ENCODE measurements at regions of chr10 and their contacts with region 1.

Region 1: DNA sequence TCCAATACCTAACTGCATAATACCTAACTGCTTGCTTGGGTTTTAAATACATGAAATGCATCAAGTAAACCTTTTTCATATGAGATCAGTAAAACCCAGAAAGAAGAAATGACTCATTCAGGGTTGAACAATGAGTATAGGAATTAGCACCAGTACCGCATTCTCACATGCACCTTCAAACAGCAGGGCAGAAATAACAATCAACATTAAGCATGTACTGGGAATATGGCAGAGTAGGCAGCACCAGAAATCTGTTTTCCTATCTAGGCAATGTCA is 850.3 kb upstream of the SORCS1 start:
- DNase-seq: no peak

Region 2: GRCh38 chr10:107966673-107967225 is 48.1 kb before region 1 on chr10:
- intact Hi-C with region 1: no loop called
- DNase-seq: no peak

Region 3: GRCh38 chr10:108049668-108050067 is 34.8 kb after region 1 on chr10:
- intact Hi-C with region 1: no loop called
- DNase-seq: no peak

Region 4: GRCh38 chr10:108060246-108060645 is 45.4 kb after region 1 on chr10:
- intact Hi-C with region 1: loop called in 1 of 2 experiments (anchors 2 kb)
- DNase-seq: no peak

Region 5: GRCh38 chr10:108749042-108749441 is 734.2 kb after region 1 on chr10:
- intact Hi-C with region 1: no loop called
- DNase-seq: no peak